Transverse colon (tissue), 4 donors: ENCODE measurements at regions of chr3 and their contacts with region 1.

Region 1: GRCh38 chr3:172449466-172450149 is 1.4 kb upstream of the GHSR start:
- DNase-seq: no peak
- H3K4me3 ChIP-seq: no peak overlapping the region
- H3K27ac ChIP-seq: no peak overlapping the region
- H3K4me1 ChIP-seq: peaks cover 0 to 9% (median 0%) of the 10 kb centered on the region in 4 donors
- H3K27me3 ChIP-seq: peaks cover 75% of the 10 kb centered on the region
- CTCF ChIP-seq: no peak
- EP300 ChIP-seq: no peak
- POLR2A ChIP-seq: no peak

Region 2: DNA sequence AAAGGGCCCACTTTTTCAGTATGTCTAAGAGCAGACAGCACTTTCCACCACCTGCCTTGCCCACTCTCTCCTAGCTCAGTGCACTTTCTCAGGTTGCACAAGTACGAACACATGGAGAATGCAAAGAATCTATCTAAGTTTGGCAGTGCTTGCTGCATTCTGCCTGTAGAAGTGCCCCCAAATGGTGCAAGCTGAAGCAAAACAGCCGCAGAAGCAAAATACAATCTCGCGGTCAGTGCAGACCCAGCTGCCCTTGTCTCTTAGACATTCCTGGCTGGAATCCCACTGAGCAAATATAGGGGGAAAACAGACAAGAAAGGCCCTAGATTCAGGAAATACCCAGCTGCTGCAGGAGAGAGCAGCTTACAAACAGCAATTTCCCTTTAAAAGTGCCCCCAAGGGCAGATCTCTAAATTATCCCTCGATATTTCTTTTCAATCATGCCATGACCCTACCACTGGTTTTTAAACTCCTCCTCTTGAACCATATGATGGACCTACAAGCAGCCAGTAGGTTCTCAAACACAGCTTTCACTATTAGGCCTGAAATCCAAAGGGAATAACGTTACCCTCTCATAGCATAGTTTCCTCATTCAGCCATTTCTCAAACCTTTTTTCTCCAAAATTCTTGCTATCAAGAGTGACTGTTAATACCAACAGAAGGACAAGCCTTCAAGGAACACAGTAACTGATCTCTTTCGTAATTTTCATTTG is 1056.4 kb before region 1 on chr3:
- in situ Hi-C with region 1: no loop called
- intact Hi-C with region 1: loop called (anchors 5 kb)
- DNase-seq: no peak
- H3K4me3 ChIP-seq: no peak overlapping the region
- H3K27ac ChIP-seq: no peak overlapping the region
- H3K4me1 ChIP-seq: peaks cover 0 to 6% (median 2%) of the 10 kb centered on the region in 4 donors
- H3K27me3 ChIP-seq: no peaks in the 10 kb centered on the region
- CTCF ChIP-seq: no peak
- EP300 ChIP-seq: no peak
- POLR2A ChIP-seq: no peak